ENCODE measurements at regions of chr7 and their contacts with region 1.

Region 1: DNA sequence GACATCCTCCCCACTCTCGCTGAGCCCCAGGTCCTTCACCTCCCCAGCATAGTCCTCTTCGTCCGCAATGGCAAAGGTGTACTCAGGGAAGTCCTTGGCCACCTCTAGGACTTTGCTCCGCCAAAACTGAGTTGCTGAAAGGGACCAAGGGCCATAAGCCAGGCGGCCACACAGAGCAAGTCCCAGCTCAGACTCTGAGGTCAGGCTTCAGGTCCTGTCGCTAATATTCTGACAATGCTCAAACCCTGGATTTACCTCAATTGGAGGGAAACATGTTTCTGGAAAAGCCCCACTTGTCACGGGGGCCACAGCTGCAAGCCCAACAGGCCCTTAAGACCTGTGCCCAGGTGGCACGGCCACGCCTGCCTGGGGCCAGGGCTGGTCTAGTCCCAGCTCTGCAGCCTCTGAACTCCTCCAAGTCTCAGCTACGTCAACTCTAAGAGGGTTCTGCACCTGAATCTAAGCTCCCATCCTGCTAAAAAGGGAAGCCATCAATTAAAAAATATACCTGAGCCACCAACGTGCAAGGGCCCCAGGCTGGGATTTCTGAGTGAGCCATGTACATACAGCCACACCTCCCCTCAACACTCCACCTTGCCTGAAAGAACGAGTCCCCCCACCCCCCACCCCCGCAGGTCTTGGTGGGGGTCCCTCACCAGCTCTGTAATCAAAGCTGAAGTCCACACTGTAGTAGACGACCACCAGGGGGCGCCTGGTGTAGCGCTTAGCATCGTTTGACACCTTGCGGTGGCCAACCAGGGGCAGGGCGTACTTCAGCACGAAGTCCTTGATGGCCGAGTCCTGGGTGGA is 22.9 kb downstream of the PDIA4 start:
- DNase-seq: peak; percentile 79 to 90 (median 83)
- ATAC-seq: peak; percentile 63 to 88 (median 82)
- H3K4me3 ChIP-seq: no peak overlapping the region
- H3K27ac ChIP-seq: no peak overlapping the region
- H3K4me1 ChIP-seq: no peaks in the 10 kb centered on the region
- H3K27me3 ChIP-seq: no peaks in the 10 kb centered on the region
- CTCF ChIP-seq: peak; percentile 78 to 90 (median 84)
- POLR2A ChIP-seq: no peak

Region 2: DNA sequence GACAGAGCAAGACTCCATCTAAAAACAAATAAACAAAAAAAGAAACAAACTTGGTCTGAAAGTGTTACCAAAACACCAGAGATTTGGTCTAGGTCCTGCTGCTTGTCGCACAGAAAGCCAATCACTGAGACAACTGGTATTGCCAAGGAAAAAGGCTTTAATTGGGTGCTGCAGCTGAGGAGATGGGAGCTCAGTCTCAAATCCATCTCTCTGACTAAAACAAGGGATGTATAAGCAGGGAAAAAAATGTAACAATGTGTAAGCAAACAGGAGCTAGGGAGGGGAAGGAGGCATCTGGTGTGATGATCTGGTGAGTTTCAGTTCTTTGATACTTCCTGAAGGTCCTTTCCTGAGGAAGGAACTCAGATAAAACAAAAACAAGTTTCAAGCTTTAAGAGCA is 31.2 kb after region 1 on chr7:
- intact Hi-C with region 1: no loop called
- DNase-seq: no peak
- ATAC-seq: no peak
- H3K4me3 ChIP-seq: no peak overlapping the region
- H3K27ac ChIP-seq: no peak overlapping the region
- H3K4me1 ChIP-seq: no peaks in the 10 kb centered on the region
- H3K27me3 ChIP-seq: no peaks in the 10 kb centered on the region
- CTCF ChIP-seq: no peak
- POLR2A ChIP-seq: no peak

Region 3: DNA sequence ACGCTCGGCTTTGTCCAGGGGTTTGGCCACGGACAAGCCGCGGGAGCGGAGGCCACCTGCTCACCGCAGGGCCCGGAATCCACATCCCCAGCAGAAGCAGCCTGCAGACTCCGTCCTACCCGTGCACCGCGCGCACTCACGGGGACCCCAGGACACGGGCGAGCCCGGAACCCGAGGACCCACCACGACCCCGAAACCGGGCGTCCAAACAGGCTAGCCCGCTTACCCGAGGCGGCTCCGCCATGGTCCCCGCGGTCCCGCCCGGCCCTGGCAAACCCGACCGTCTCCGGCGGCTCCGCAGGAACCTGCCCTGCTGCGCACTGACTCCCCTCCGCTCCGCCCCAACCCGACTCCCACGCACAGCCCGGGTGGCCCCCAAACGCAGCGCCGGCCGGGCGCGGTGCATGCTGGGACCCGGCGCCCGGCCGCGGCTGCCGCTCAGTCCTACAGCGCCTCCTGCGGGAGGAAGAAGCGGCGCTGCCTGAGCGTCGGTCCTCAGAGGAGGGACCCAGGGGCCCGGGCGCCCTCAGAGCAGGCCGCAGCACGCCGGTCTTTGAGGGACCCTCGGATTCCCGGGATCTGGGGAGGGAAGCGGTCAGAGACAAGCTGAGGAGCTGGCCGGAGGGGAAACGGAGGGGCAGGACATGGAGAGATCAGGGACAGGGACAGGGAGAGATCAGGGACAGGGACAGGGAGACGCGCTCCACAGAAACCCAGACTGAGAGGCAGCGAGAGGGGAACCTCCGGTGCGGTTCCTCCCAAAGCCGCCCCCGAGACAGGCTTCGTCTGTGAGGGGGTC is 85.2 kb after region 1 on chr7 and contains the start of gene ZNF786:
- intact Hi-C with region 1: loop called in 9 of 10 experiments (anchors 1 to 5 kb)
- DNase-seq: peak; percentile 91 to 95 (median 92)
- ATAC-seq: peak; percentile 93 to 98 (median 96)
- H3K4me3 ChIP-seq: peak within 1 kb of the TSS; percentile 68 to 99 (median 88)
- H3K27ac ChIP-seq: peak within 1 kb of the TSS; percentile 94 to 100 (median 98)
- H3K4me1 ChIP-seq: peaks cover 0 to 30% (median 11%) of the 10 kb centered on the region in 12 donors
- H3K27me3 ChIP-seq: no peaks in the 10 kb centered on the region
- CTCF ChIP-seq: peak; percentile 82 to 96 (median 95)
- POLR2A ChIP-seq: peak in 1 of 2 donors; percentile 84
- total RNA-seq, gene ZNF786: 2.2 to 5.3 (median 3.0) TPM